ENCODE measurements at regions of chr13 and their contacts with region 1.

Region 1: GRCh38 chr13:109715902-109716301 is 70.5 kb downstream of the IRS2 start:
- DNase-seq: peak; percentile 66 to 89 (median 78)
- ATAC-seq: peak; percentile 68 to 88 (median 80)
- H3K4me3 ChIP-seq: no peak overlapping the region
- H3K27ac ChIP-seq: peak overlapping the region; percentile 17 to 80 (median 49)
- H3K4me1 ChIP-seq: peaks cover 0 to 36% (median 13%) of the 10 kb centered on the region in 4 donors
- H3K27me3 ChIP-seq: no peaks in the 10 kb centered on the region
- CTCF ChIP-seq: peak in 2 of 4 donors; percentile 8 to 14
- POLR2A ChIP-seq: peak; percentile 40

Region 2: DNA sequence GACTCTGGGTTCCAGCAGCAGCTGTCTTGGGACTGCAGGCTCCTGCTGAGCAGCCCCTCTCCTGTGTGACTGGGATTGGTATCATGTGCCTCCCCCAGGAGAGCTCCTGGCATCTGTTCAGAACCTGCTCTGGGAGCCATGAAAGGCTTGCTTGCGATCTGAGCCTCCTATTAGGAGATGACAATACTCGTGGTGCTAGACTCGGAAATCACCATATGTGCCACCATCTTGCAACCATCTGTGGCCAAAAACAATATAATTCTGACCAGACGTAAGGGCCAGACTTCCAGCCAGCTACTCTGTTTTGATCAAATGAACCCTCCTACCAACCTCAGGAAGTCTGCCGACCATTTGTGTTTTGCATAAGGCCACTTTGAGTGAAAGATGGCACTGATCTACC is 414.2 kb before region 1 on chr13:
- intact Hi-C with region 1: no loop called
- DNase-seq: no peak
- ATAC-seq: no peak
- H3K4me3 ChIP-seq: no peak overlapping the region
- H3K27ac ChIP-seq: no peak overlapping the region
- H3K4me1 ChIP-seq: no peaks in the 10 kb centered on the region
- H3K27me3 ChIP-seq: no peaks in the 10 kb centered on the region
- CTCF ChIP-seq: no peak
- POLR2A ChIP-seq: no peak

Region 3: DNA sequence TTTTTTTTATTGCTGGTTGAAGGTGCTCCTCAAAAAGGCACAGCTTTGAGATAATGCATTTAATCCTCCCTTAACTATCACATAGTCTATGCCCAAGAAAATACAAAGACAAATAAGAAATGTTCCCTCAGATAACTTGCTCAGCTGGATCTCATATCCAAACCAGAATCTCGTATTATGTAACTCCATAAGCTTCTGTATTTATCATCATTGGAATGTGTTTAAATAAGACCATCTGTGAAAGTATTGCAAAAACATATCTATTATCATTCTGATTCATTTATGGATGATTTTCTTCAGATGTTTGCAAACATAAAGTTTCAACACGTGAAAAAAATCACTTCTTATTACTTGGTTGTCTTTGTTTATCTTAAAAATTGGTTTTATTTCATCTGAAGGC is 120.4 kb before region 1 on chr13:
- intact Hi-C with region 1: no loop called
- DNase-seq: no peak
- ATAC-seq: no peak
- H3K4me3 ChIP-seq: no peak overlapping the region
- H3K27ac ChIP-seq: no peak overlapping the region
- H3K4me1 ChIP-seq: peaks cover 0 to 20% (median 9%) of the 10 kb centered on the region in 4 donors
- H3K27me3 ChIP-seq: no peaks in the 10 kb centered on the region
- CTCF ChIP-seq: no peak
- POLR2A ChIP-seq: no peak

Region 4: GRCh38 chr13:109786457-109787134 is 70.7 kb after region 1 on chr13 and contains the start of gene IRS2:
- intact Hi-C with region 1: loop called in 1 of 2 experiments (anchors 5 kb)
- DNase-seq: peak; percentile 94 to 97 (median 96)
- ATAC-seq: peak; percentile 63 to 73 (median 68)
- H3K4me3 ChIP-seq: peak within 1 kb of the TSS; percentile 67 to 75 (median 74)
- H3K27ac ChIP-seq: peak within 1 kb of the TSS; percentile 89 to 98 (median 97)
- H3K4me1 ChIP-seq: peaks cover 0 to 32% (median 12%) of the 10 kb centered on the region in 4 donors
- H3K27me3 ChIP-seq: no peaks in the 10 kb centered on the region
- CTCF ChIP-seq: no peak
- POLR2A ChIP-seq: peak; percentile 99
- total RNA-seq, gene IRS2: 8.8 to 26.0 (median 17.5) TPM